ENCODE measurements at regions of chr2 and their contacts with region 1.

Region 1: DNA sequence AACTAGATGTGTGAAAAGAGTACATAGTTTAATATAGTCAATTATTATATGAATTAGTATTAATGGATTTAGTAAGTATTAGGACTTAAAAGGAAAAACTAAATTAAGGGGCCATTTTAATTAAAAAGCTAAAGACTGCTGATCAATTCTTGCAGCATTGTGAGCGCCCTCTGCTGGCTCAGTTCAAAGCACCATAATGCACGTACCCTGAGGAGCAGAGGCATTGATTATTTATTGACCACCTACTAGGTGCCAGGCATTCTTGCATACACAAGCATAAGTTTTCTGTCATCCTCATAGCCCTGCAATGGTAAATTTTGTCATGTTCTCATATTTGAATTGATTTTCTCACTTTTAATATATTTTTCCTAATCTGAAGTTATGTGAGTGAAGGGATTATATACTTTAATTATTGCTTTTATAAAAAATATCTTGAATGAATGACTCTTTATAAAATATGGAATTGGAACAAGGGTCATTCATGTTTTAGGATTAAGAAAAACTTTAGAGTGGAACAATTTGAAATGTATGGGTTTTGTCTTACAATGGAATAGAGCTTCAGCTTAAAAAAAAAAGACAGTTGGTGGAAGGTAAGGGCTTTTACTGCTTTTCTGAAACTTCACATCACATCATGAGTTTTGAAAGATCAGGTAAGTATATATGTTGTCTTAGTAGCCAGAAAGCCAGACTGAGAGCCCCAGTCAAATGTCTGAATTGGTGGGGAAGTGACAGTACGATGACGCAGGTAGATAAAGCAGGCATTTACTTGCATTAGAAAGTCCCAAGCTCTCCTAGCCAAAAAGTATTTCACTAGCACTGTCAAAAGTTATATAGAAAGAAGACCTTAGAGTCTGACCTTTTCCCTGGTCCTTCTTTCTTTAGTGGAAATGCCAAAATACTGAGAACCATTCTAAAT is 9.7 kb downstream of the ITGA4 start:
- DNase-seq: peak; percentile 27 to 67 (median 47)
- H3K4me3 ChIP-seq: no peak overlapping the region
- H3K27ac ChIP-seq: no peak overlapping the region
- H3K4me1 ChIP-seq: no peaks in the 10 kb centered on the region
- H3K27me3 ChIP-seq: no peaks in the 10 kb centered on the region
- CTCF ChIP-seq: peak in 2 of 3 donors; percentile 13 to 35
- EP300 ChIP-seq: no peak
- POLR2A ChIP-seq: no peak

Region 2: DNA sequence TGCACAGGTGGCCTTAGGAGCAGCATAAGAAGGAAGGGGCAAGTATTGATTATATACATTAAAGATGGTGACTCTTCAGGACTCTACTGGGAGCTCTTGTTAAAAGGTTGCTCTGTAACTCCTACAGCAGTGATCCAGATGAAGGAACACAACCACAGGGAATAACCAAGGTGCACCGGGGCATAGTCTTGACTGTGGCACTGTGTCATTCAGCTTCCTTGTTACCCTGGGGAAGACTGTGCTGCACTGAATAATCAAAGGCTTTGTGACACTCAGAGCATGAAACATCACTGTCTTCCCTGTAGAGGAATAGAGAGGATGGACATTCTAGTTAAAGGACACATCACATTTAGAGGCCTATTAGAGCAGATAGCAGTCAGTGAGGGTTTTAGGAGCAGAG is 381.2 kb before region 1 on chr2:
- intact Hi-C with region 1: loop called in 1 of 4 experiments (anchors 10 kb)
- DNase-seq: no peak
- H3K4me3 ChIP-seq: no peak overlapping the region
- H3K27ac ChIP-seq: no peak overlapping the region
- H3K4me1 ChIP-seq: no peaks in the 10 kb centered on the region
- H3K27me3 ChIP-seq: no peaks in the 10 kb centered on the region
- CTCF ChIP-seq: no peak
- EP300 ChIP-seq: no peak
- POLR2A ChIP-seq: no peak

Region 3: DNA sequence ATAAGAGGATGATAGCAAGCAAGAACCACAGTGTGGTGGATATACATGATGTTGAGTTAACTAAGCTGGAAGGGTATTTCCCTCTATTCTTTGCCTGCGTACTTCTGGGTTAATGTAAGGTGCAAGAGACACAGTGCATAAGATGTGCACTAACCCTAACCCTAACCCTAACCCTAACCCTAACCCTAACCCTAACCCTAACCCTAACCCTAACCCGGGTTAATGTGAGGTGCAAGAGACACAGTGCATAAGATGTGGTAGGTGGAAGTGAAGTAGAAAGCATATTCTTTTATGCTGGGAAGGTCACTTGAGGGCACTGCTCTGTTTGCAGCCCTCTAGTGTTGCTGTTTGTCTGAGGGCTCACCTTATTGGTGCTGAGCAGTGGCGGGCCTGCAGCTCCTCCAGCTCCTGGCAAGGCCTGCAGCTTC is 191.3 kb before region 1 on chr2:
- intact Hi-C with region 1: no loop called
- DNase-seq: peak in 1 of 5 donors; percentile 21
- H3K4me3 ChIP-seq: no peak overlapping the region
- H3K27ac ChIP-seq: no peak overlapping the region
- H3K4me1 ChIP-seq: no peaks in the 10 kb centered on the region
- H3K27me3 ChIP-seq: no peaks in the 10 kb centered on the region
- CTCF ChIP-seq: no peak
- EP300 ChIP-seq: no peak
- POLR2A ChIP-seq: no peak

Measured in ovary (tissue), 10 donors.